ENCODE measurements at regions of chr5 and their contacts with region 1.

Region 1: DNA sequence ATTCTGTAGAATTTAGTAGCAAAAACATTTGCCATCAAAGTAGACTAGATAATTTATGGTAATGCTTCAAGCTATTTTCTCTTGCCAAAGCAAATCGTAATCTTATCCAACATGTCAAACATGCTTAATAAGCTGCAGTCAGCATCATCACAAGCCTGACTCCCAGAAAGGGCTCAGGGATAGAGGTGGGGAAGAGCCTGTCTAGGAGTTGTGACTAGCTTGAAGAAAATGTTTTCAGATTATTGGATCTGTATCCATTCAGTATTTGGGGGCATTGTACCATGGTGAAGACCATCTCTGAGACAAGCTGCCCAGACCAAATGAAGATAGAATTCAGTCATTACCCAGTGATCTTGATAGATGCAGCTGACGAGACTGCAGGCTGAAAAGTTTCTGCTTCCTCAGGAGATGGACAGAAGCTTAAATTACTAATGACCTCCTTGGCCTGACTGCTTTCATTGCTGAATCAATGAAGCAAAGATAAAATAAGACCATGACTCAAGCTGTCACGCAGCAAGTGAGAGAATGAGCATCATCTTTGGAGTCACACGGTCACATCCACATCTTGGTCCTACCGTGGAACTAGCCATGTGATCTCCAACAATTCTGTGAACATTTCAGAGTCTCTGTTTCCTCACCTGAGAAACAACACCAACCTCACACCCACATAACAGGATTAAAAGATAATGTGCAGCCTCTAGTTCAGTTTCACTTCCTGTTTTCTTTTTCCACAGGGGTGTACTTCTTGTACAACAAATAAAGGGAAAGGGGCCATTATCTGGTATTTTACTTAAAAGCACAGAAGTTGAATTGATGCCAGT is 9.4 kb downstream of the ERAP2 start:
- DNase-seq: no peak
- ATAC-seq: peak; percentile 96 to 99 (median 98)
- H3K4me3 ChIP-seq: no peak overlapping the region
- H3K27ac ChIP-seq: peak overlapping the region; percentile 86
- H3K4me1 ChIP-seq: peaks cover 17% of the 10 kb centered on the region
- H3K27me3 ChIP-seq: no peaks in the 10 kb centered on the region
- CTCF ChIP-seq: no peak

Region 2: DNA sequence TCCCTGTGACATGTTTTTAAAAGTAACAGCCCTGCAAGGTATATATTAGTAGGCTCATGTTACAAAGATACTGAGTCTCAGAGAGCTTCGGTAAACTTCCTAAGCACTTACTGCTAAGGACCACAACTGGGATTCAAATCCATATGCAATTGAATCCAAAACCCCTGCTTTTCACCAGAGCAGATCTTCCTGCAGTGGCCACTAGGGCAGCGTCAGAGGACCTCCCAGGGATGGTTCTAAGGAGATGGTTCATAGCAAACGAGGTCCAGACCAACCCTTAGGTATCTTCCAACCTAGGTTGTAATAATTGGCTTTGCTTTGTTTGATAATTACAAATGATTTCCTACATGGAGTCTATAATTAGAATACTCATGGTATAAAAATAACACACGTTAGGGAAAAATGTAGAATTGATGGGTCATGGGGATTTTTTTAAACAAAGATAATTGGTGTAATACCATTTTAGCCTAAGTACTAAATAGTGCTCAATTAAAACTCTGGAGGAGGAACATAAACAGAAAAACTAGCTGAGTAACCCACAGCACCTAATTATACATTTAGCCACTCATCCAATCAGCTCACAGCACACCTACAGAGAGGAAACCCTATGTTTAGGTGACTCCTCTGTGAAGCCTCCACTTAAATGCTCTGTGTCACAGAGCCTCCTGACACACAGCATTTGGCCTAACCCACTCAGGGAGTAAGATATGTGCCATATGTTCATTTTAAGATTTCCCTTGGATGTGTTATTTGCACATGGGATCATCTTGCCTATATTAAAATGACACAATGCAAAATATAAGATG is 233.6 kb before region 1 on chr5:
- intact Hi-C with region 1: no loop called
- DNase-seq: no peak
- ATAC-seq: no peak
- H3K4me3 ChIP-seq: no peak overlapping the region
- H3K27ac ChIP-seq: no peak overlapping the region
- H3K4me1 ChIP-seq: peaks cover 18% of the 10 kb centered on the region
- H3K27me3 ChIP-seq: no peaks in the 10 kb centered on the region
- CTCF ChIP-seq: no peak

Region 3: GRCh38 chr5:96714951-96715451 is 170.7 kb before region 1 on chr5:
- intact Hi-C with region 1: no loop called
- DNase-seq: peak in 1 of 2 donors; percentile 25
- ATAC-seq: peak; percentile 83 to 92 (median 86)
- H3K4me3 ChIP-seq: no peak overlapping the region
- H3K27ac ChIP-seq: peak overlapping the region; percentile 70
- H3K4me1 ChIP-seq: peaks cover 81% of the 10 kb centered on the region
- H3K27me3 ChIP-seq: no peaks in the 10 kb centered on the region
- CTCF ChIP-seq: no peak

Region 4: GRCh38 chr5:96919754-96920197 is 34.0 kb after region 1 on chr5:
- intact Hi-C with region 1: loop called in 1 of 2 experiments (anchors 5 kb)
- DNase-seq: no peak
- ATAC-seq: no peak
- H3K4me3 ChIP-seq: no peak overlapping the region
- H3K27ac ChIP-seq: no peak overlapping the region
- H3K4me1 ChIP-seq: peaks cover 31% of the 10 kb centered on the region
- H3K27me3 ChIP-seq: no peaks in the 10 kb centered on the region
- CTCF ChIP-seq: no peak

Region 5: GRCh38 chr5:96934708-96935558 is 49.2 kb after region 1 on chr5:
- intact Hi-C with region 1: loop called in 1 of 2 experiments (anchors 5 kb)
- DNase-seq: peak; percentile 92 to 96
- ATAC-seq: peak; percentile 81 to 86 (median 84)
- H3K4me3 ChIP-seq: peak overlapping the region; percentile 94
- H3K27ac ChIP-seq: peak overlapping the region; percentile 99
- H3K4me1 ChIP-seq: peaks cover 57% of the 10 kb centered on the region
- H3K27me3 ChIP-seq: no peaks in the 10 kb centered on the region
- CTCF ChIP-seq: no peak

Region 6: DNA sequence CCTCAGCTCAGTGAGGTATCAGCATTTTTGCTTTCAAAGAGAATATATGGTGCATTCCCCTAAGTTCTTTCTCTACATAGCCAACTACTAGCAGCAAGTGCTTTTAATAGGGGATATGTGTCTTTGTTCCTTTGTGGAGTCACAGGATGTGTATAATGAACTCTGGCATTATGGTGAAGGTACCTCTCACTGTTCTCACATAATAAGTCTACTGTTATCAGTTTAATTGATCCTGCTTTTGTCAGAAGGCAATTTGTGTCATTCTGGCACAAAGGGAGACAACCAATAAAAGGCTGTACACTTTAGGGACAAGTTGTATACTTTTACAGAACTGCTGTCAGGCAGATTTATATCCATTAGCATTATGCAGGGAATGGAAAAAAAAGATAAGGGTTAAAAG is 828.7 kb after region 1 on chr5:
- intact Hi-C with region 1: no loop called
- DNase-seq: no peak
- ATAC-seq: no peak
- H3K4me3 ChIP-seq: no peak overlapping the region
- H3K27ac ChIP-seq: no peak overlapping the region
- H3K4me1 ChIP-seq: no peaks in the 10 kb centered on the region
- H3K27me3 ChIP-seq: no peaks in the 10 kb centered on the region
- CTCF ChIP-seq: no peak